ENCODE measurements at regions of chr3 and their contacts with region 1.

Region 1: DNA sequence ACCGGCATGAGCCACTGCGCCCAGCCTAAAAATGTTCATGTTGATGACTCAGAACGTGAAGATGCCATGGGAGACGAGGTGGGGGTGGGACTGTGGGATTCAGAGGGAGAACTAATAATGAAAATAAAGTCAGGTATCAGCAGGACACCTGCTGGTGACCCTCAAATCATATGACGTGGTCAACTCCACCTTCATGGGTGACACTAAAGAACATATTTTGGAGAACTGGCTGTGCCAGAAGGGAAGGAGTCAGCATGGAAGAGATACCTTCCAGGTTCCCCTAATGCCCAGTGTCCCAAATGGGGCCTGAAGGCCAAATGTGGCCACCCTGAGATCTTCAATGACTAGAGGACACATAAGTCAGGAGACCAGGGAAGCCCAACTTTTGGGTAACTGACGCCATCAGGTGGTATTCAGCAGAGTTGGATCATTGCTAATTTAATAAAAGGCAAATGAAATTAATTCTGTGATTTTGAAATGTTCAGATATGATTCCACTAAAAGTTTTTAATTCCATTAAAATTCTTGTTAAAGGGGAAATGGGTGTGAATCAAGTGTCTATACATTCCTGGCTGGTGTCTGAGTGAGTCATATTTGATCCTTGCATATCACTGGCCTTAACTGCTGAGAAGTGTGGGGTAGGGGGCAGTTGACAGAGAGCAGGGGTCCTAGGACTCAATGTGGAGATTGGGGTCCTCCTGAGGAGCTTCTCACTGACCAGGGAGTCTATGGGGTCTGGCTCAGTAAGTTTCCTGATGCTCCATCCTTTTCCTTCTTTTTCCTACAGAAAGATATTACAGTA is 88.7 kb upstream of the GSK3B start:
- DNase-seq: no peak
- ATAC-seq: peak; percentile 52

Region 2: GRCh38 chr3:119637679-119638525 is 545.0 kb before region 1 on chr3:
- intact Hi-C with region 1: no loop called
- DNase-seq: no peak
- ATAC-seq: peak; percentile 13

Region 3: DNA sequence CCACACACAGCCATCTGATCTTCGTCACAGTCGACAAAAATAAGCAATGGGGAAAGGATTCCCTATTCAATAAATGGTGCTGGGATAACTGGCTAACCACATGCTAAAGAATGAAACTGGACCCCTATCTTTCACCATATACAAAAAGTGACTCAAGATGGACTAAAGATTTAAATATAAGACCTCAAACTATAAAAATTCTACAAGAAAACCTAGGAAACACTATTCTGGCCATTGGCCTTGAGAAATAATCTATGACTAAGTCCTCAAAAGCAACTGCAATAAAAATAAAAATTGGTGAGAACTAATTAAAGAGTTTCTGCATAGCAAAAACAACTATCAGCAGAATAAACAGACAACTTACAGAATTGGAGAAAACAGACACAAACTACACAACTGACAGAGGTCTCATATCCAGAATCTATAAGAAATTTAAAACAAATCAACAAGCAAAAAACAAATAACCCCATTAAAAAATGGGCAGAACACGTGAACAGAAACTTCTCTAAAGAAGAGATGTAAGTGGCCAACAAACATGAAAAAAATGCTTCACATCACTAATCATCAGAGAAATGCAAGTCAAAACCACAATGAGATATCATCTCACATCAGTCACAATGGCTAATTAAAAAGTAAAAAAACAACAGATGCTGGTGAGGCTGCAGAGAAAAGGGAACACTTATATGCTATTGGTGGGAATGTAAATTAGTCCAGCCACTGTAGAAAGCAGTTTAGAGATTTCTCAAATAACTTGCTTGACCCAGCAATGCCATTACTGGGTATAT is 297.0 kb before region 1 on chr3:
- intact Hi-C with region 1: loop called in 1 of 2 experiments (anchors 10 kb)
- DNase-seq: no peak
- ATAC-seq: no peak

Region 4: DNA sequence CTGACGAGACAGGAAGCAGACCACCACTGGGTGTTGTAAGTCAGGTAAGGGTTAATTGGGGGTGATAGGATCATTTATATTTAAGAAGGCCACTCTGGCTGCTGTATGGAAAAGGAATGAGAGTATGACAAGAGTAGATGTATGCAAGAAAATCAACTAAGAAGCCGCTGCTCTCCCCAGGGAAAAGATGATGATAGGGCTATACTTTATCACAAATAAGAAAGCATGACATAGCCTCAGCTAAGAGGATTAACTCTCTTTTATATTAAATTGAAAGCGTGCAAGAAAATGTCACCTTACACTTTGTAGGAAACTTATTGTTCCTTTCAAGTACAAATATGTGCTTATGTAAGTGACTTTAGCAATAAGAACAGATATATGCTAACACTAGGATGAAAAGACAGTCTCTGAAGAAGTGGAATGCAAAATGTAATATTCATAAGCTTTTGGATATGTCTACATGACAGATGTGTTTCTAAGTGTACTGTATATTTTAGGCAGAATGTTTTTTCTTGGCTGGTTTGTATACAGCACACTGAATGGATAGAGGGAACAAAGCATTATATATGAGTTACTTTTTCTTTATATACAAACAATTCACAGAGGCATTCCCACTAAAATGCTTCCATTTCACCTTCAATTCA is 404.5 kb after region 1 on chr3:
- intact Hi-C with region 1: no loop called
- DNase-seq: no peak
- ATAC-seq: no peak